Right ventricle myocardium inferior (tissue), 1 donor: ENCODE measurements at regions of chr17 and their contacts with region 1.

Region 1: GRCh38 chr17:80959330-80960036 is 32.2 kb upstream of the CHMP6 start:
- DNase-seq: peak; percentile 91
- ATAC-seq: peak; percentile 96

Region 2: GRCh38 chr17:80847496-80848230 is 111.8 kb before region 1 on chr17:
- intact Hi-C with region 1: no loop called
- DNase-seq: no peak
- ATAC-seq: no peak

Region 3: GRCh38 chr17:80873284-80873951 is 86.1 kb before region 1 on chr17:
- intact Hi-C with region 1: loop called (anchors 2 kb)
- DNase-seq: peak; percentile 67
- ATAC-seq: peak; percentile 76